ENCODE measurements at regions of chr20 and their contacts with region 1.

Region 1: DNA sequence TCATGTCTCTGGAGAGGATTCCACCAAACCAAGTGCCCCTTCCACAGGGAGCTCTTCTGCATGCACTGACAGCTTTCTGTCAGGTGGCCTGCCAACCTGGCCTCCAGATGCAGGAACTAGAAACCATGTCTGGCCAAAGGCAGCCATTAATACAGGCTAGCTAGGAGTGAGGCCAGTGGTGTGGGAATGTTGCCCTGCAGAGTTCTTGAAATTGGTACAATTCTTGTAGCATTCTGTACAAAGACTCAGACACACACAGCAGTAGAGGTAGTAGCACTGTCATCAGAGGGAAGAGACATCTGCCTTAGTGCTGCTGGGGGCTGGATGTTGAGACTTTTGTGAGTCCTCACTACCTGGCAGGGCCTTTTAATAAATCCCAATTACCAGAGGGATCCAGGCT is 48.8 kb downstream of the RNF24 start:
- DNase-seq: no peak
- H3K4me3 ChIP-seq: no peak overlapping the region
- H3K27ac ChIP-seq: no peak overlapping the region
- H3K4me1 ChIP-seq: no peaks in the 10 kb centered on the region
- H3K27me3 ChIP-seq: no peaks in the 10 kb centered on the region
- CTCF ChIP-seq: no peak

Region 2: GRCh38 chr20:3919352-3919751 is 47.2 kb before region 1 on chr20:
- CTCF ChIA-PET with region 1: no interaction called
- POLR2A ChIA-PET with region 1: no interaction called
- intact Hi-C with region 1: no loop called
- DNase-seq: no peak
- H3K4me3 ChIP-seq: no peak overlapping the region
- H3K27ac ChIP-seq: no peak overlapping the region
- H3K4me1 ChIP-seq: no peaks in the 10 kb centered on the region
- H3K27me3 ChIP-seq: no peaks in the 10 kb centered on the region
- CTCF ChIP-seq: no peak

Region 3: DNA sequence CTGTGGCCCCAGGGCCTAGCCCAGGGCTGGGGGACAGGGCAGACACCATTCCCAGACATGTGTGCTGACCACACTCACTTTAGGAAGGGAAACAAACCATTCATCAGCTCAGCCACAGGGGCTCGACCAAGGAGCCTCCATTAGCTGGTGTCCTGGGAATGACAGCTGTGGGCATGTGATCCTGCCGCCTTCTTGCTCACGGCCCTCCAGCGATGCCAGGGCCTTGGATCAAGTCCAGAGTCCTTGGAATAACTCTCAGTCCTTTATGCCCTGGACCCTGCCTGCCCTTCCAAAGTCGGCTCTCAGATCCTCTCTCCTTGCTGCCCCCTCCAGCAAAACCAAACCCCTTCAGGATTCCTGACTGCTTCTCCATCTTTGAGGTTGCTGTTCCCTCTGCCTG is 213.8 kb after region 1 on chr20:
- CTCF ChIA-PET with region 1: no interaction called
- POLR2A ChIA-PET with region 1: interaction called, 19 read pairs
- intact Hi-C with region 1: no loop called
- DNase-seq: no peak
- H3K4me3 ChIP-seq: no peak overlapping the region
- H3K27ac ChIP-seq: no peak overlapping the region
- H3K4me1 ChIP-seq: no peaks in the 10 kb centered on the region
- H3K27me3 ChIP-seq: no peaks in the 10 kb centered on the region
- CTCF ChIP-seq: no peak

Measured in PC-9 (cell line).